A673 (cell line): ENCODE measurements at regions of chr14 and their contacts with region 1.

Region 1: GRCh38 chr14:75770635-75771034 is 109.6 kb downstream of the TTLL5 start:
- DNase-seq: no peak
- H3K4me3 ChIP-seq: no peak overlapping the region
- H3K27ac ChIP-seq: no peak overlapping the region
- H3K4me1 ChIP-seq: no peaks in the 10 kb centered on the region
- H3K27me3 ChIP-seq: no peaks in the 10 kb centered on the region
- CTCF ChIP-seq: no peak

Region 2: GRCh38 chr14:74720526-74720925 is 1050.1 kb before region 1 on chr14:
- CTCF ChIA-PET with region 1: no interaction called
- POLR2A ChIA-PET with region 1: no interaction called
- intact Hi-C with region 1: no loop called
- DNase-seq: no peak
- H3K4me3 ChIP-seq: no peak overlapping the region
- H3K27ac ChIP-seq: no peak overlapping the region
- H3K4me1 ChIP-seq: no peaks in the 10 kb centered on the region
- H3K27me3 ChIP-seq: no peaks in the 10 kb centered on the region
- CTCF ChIP-seq: no peak

Region 3: GRCh38 chr14:75802486-75802885 is 31.9 kb after region 1 on chr14:
- CTCF ChIA-PET with region 1: no interaction called
- POLR2A ChIA-PET with region 1: interaction called, 15 read pairs
- intact Hi-C with region 1: no loop called
- DNase-seq: no peak
- H3K4me3 ChIP-seq: no peak overlapping the region
- H3K27ac ChIP-seq: no peak overlapping the region
- H3K4me1 ChIP-seq: no peaks in the 10 kb centered on the region
- H3K27me3 ChIP-seq: no peaks in the 10 kb centered on the region
- CTCF ChIP-seq: no peak